PC-3 (cell line): ENCODE measurements at regions of chr14 and their contacts with region 1.

Region 1: GRCh38 chr14:71138448-71139293 is 231.4 kb downstream of the PCNX1 start:
- DNase-seq: peak; percentile 80
- ATAC-seq: peak; percentile 27
- H3K4me3 ChIP-seq: 0 out of 2 replicates have a peak overlapping the region, but pooled peaks have one; percentile 10
- H3K27ac ChIP-seq: peak overlapping the region; percentile 15; the same call in 1 of the 2 replicates
- H3K4me1 ChIP-seq: peaks cover 33% of the 10 kb centered on the region
- H3K27me3 ChIP-seq: no peaks in the 10 kb centered on the region
- CTCF ChIP-seq: peak; percentile 99

Region 2: DNA sequence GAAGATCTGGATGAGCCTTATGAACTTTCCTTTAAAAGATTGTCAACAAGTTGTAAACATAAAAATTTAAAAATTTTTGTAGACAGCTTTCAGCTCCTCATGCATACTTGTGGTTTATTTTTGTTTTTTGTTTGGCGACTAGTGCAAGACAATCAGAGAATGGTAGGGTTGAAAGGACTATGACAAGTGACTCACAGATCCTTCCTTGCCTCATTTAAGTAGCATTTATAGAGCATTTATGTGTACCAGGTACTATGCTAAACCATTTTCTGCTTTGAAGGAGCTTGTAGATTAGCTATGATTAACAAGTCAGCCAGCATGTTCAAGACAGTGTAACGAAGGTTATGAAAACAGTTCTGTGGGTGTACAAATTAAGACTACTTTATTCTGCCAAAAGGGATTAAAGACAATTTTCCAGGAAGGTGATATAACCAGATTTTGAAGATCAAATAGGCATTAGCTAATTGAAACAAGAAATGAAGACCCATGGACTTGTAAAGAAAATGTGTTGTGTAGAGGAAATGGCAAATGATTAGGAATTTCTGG is 109.4 kb before region 1 on chr14:
- CTCF ChIA-PET with region 1: no interaction called
- POLR2A ChIA-PET with region 1: no interaction called
- intact Hi-C with region 1: no loop called
- DNase-seq: no peak
- ATAC-seq: peak; percentile 76
- H3K4me3 ChIP-seq: no peak overlapping the region
- H3K27ac ChIP-seq: no peak overlapping the region
- H3K4me1 ChIP-seq: no peaks in the 10 kb centered on the region
- H3K27me3 ChIP-seq: no peaks in the 10 kb centered on the region
- CTCF ChIP-seq: no peak

Region 3: DNA sequence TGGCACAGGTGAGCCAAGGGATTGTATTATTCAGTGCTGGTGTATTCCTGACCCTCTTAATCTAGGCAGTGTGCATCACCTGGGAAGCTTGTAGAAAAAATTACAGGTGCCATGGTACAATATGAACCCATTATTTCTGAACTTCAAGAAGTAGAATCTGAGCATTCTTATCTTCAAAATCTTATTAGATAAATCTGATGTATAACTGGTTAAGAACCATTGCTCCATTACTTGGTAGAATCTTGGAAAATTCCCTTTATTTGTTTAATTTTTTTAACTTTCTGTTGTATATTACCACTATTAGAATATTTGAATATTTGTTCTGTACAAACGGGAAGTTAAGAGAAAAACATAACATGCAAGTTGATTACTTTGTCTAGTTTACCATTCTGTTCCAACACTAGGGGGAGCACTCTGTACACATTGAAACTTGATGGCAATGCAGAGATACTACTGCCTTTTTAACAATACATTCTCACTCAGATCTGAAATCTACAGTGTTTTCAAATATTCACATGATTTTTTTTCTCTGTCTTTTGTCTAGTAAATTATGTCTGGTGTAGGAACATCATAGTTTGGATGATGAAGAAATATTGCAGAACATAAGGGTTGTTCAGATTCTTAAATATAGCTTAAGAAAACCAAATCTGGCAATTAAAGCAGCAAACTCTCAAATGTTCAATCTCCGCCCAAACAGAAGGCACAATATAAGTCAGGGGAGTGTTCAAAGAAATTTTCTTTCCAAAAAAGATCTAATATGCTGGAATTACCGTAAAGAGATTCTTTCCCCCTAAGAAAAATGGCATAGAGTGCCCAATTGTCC is 34.8 kb before region 1 on chr14:
- CTCF ChIA-PET with region 1: no interaction called
- POLR2A ChIA-PET with region 1: no interaction called
- intact Hi-C with region 1: loop called (anchors 1 kb)
- DNase-seq: peak; percentile 78
- ATAC-seq: peak; percentile 89
- H3K4me3 ChIP-seq: no peak overlapping the region
- H3K27ac ChIP-seq: no peak overlapping the region
- H3K4me1 ChIP-seq: peaks cover 7% of the 10 kb centered on the region; the same call in 1 of the 2 replicates
- H3K27me3 ChIP-seq: no peaks in the 10 kb centered on the region
- CTCF ChIP-seq: peak; percentile 96

Region 4: GRCh38 chr14:71248204-71248603 is 109.5 kb after region 1 on chr14:
- CTCF ChIA-PET with region 1: no interaction called
- POLR2A ChIA-PET with region 1: no interaction called
- intact Hi-C with region 1: loop called (anchors 1 kb)
- DNase-seq: peak; percentile 71
- ATAC-seq: peak; percentile 86
- H3K4me3 ChIP-seq: no peak overlapping the region
- H3K27ac ChIP-seq: 0 out of 2 replicates have a peak overlapping the region, but pooled peaks have one; percentile 3
- H3K4me1 ChIP-seq: peaks cover 13% of the 10 kb centered on the region
- H3K27me3 ChIP-seq: no peaks in the 10 kb centered on the region
- CTCF ChIP-seq: no peak

Region 5: DNA sequence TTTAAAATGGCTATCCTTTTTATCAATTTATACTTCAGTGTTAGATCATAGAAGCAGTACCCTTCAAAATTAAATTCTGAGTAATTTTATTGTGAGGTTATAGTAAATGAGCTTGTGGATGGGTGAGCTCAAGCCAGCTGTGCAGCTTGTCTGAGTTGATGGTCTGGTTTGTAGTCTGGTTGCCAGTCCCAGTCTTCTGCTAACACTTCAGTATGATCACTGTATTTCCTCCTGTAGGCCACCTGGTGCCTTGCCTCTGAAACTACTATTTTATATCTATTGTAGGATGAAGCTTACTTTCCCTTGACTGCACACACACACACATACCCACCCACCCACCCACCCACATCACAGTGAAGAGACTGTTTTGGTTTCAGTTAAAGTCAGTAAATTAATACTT is 265.0 kb after region 1 on chr14:
- CTCF ChIA-PET with region 1: interaction called, 22 read pairs
- POLR2A ChIA-PET with region 1: no interaction called
- intact Hi-C with region 1: loop called (anchors 1 kb)
- DNase-seq: peak; percentile 51
- ATAC-seq: peak; percentile 85
- H3K4me3 ChIP-seq: no peak overlapping the region
- H3K27ac ChIP-seq: no peak overlapping the region
- H3K4me1 ChIP-seq: peaks cover 16% of the 10 kb centered on the region; the same call in 1 of the 2 replicates
- H3K27me3 ChIP-seq: no peaks in the 10 kb centered on the region
- CTCF ChIP-seq: 0 out of 2 replicates have a peak, but pooled peaks have one; percentile 23

Region 6: DNA sequence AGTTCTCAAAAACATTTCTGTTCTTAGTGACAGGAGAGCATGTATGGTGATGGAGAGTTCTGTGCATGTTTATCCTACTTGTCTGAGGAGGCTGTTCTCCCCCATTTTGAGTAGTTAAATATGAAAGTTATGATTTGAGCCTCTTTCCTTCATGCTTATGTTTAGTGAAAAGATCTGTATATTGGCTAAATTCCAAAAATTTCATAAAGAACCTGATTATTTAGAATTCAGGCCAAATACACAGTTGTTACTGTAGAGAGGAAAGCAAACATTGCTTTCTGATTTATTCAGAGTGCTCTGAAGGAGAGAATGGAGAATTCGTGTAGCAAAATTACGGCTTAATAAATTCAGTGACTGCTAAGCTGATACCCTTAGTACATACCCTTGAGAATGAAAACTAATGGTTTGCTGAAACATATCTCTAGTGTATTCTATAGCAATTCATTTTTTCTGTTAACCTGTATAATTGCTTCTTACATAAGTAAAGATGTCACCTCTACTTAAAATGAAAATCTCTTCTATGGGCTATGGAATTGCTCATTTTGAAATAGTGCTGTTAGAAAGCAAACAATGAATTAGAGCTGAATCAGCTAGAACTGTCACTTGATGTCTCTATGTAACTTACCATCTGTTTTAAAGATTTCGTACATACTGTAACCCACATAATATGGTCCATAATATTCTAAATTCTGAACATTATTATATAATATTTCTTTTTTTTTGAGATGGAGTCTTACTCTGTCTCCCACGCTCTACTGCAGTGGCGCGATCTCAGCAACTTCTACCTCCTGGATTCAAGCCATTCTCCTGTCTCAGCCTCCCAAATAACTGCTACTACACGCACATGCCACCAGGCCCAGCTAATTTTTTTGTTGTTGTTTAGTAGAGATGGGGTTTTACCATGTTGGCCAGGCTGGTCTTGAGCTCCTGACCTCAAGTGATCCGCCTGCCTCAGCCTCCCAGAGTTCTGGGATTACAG is 376.6 kb after region 1 on chr14:
- CTCF ChIA-PET with region 1: no interaction called
- POLR2A ChIA-PET with region 1: no interaction called
- intact Hi-C with region 1: loop called (anchors 10 kb)
- DNase-seq: no peak
- ATAC-seq: peak; percentile 43
- H3K4me3 ChIP-seq: no peak overlapping the region
- H3K27ac ChIP-seq: no peak overlapping the region
- H3K4me1 ChIP-seq: no peaks in the 10 kb centered on the region
- H3K27me3 ChIP-seq: no peaks in the 10 kb centered on the region
- CTCF ChIP-seq: no peak

Region 7: DNA sequence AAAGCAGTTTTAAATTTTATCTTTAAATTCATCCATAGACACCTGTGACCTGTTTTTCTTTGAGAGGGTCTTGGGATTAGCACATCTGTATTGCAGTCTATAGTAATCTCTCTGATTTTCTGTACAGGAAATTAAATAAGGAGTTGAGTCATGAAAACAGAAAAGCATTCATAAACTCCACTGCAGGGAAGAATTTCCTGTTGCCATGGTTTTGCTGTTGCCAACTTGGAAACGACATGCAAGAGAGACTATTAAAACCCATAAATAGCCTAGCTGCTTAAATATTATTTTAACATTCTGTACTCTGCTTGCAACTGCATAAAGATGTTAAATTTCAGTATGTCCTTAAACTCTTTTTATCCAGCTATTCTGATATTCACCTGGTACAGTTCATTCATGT is 512.6 kb after region 1 on chr14:
- CTCF ChIA-PET with region 1: no interaction called
- POLR2A ChIA-PET with region 1: no interaction called
- intact Hi-C with region 1: loop called (anchors 10 kb)
- DNase-seq: peak; percentile 73
- ATAC-seq: peak; percentile 60
- H3K4me3 ChIP-seq: no peak overlapping the region
- H3K27ac ChIP-seq: peak overlapping the region; percentile 31
- H3K4me1 ChIP-seq: peaks cover 50% of the 10 kb centered on the region
- H3K27me3 ChIP-seq: no peaks in the 10 kb centered on the region
- CTCF ChIP-seq: no peak

Region 8: GRCh38 chr14:71855399-71856036 is 716.8 kb after region 1 on chr14:
- CTCF ChIA-PET with region 1: interaction called, 6 read pairs
- POLR2A ChIA-PET with region 1: no interaction called
- intact Hi-C with region 1: loop called (anchors 1 kb)
- DNase-seq: peak; percentile 89
- ATAC-seq: peak; percentile 90
- H3K4me3 ChIP-seq: no peak overlapping the region
- H3K27ac ChIP-seq: no peak overlapping the region
- H3K4me1 ChIP-seq: no peaks in the 10 kb centered on the region
- H3K27me3 ChIP-seq: no peaks in the 10 kb centered on the region; the same call in 1 of the 2 replicates
- CTCF ChIP-seq: peak; percentile 96